ENCODE measurements at regions of chr6 and their contacts with region 1.

Region 1: DNA sequence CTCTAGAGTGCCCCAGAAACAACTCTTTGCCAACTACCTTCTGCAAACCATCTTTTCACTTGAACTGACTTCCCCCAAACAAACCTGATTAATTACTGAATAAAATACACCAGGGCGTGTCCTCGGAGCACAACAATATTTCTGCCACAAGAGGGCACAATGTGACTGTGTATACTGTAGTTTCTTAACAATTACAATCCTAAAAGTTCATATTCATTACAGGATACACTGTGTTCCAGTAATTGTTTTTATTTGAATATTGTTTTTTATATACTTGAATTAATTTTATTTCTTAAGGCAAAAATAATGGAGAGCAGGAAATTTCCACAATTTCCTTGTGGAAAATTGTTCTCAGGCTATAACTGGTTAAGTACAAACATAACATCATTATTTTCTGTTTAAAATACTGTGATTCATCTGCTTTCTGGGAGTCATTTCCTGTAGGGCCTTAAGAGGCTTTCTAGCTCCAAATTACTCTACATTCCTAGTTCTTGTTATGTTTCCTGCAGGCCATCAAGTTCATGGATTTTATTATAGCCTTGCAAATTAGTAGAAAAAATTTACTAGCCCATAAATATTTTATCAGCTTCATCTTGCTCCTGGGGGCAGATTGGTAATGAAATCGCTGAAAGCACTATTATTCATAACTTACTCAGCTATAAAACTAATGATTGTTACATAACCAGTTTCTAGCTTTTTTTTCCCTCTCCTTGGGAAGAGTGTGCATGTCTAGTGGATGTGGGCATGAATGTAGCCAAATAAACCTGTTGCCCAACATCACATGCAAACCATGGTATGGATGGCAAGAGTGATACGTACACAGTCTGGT is 51.9 kb upstream of the SLC22A16 start:
- DNase-seq: peak; percentile 62
- ATAC-seq: peak; percentile 55
- H3K4me3 ChIP-seq: no peak overlapping the region
- H3K27ac ChIP-seq: no peak overlapping the region
- H3K4me1 ChIP-seq: peaks cover 61% of the 10 kb centered on the region
- H3K27me3 ChIP-seq: no peaks in the 10 kb centered on the region
- CTCF ChIP-seq: peak; percentile 82
- EP300 ChIP-seq: peak in 1 of 2 experiments; percentile 18; a peak in 1 of 4 replicates
- POLR2A ChIP-seq: no peak
- RAD21 ChIP-seq: peak; percentile 71

Region 2: DNA sequence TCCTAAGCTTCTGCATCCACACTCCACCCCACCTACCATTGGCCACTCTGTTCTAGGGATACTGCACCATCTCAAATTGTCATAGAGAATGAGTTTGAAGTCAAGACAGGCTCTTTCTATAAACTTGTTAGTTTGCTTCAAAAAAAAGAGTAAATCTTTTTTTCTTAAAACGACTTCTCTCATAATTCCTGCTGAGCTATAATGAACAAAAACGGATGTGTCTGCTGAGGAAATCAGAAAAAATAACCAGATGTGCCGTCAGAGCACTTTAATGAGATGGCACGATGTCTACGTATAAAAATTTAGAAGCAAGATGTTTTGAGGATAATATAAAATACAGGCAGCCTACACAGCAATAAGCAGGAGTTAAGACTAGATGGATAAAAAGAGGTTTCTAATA is 89.0 kb before region 1 on chr6:
- CTCF ChIA-PET with region 1: no interaction called
- POLR2A ChIA-PET with region 1: no interaction called
- in situ Hi-C with region 1: no loop called
- intact Hi-C with region 1: no loop called
- DNase-seq: no peak
- ATAC-seq: no peak
- H3K4me3 ChIP-seq: no peak overlapping the region
- H3K27ac ChIP-seq: no peak overlapping the region
- H3K4me1 ChIP-seq: no peaks in the 10 kb centered on the region
- H3K27me3 ChIP-seq: peaks cover 0 to 10% of the 10 kb centered on the region in 2 experiments; a peak in 1 of 5 replicates
- CTCF ChIP-seq: no peak
- EP300 ChIP-seq: no peak
- POLR2A ChIP-seq: no peak
- RAD21 ChIP-seq: no peak

Region 3: DNA sequence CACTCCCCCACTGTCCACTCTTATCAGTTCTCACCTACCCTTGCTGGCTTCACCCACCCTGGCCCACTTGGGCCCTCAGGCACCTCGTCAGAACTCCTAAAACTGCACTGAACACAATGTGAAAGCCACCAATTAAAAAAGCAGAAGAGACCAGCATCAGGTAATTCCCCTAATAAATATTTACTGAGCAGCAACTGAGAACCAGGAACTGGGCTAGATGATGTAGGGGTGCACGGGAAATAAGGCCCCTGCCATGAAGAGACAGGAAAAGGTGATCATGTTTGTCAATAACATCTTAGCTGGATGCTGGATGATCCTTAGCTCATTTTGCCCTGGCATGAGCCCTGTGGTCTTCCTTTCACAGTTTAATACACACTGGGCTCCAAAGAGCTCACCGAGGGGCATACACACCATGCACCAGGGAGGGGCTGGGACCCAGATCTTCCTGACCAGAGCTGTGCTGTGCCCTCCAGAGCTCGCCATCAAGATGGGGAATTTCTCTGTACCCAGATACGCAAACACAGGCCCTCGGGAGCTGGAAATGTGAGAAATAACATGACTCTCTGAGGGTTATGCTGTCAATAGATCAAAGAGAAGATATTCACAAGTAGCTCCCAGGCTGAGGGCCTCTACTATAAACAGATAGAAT is 61.7 kb after region 1 on chr6:
- CTCF ChIA-PET with region 1: no interaction called
- POLR2A ChIA-PET with region 1: no interaction called
- in situ Hi-C with region 1: no loop called
- intact Hi-C with region 1: loop called (anchors 10 kb)
- DNase-seq: no peak
- ATAC-seq: no peak
- H3K4me3 ChIP-seq: no peak overlapping the region
- H3K27ac ChIP-seq: no peak overlapping the region
- H3K4me1 ChIP-seq: peaks cover 34% of the 10 kb centered on the region
- H3K27me3 ChIP-seq: no peaks in the 10 kb centered on the region
- CTCF ChIP-seq: no peak
- EP300 ChIP-seq: no peak
- POLR2A ChIP-seq: no peak
- RAD21 ChIP-seq: no peak

Region 4: DNA sequence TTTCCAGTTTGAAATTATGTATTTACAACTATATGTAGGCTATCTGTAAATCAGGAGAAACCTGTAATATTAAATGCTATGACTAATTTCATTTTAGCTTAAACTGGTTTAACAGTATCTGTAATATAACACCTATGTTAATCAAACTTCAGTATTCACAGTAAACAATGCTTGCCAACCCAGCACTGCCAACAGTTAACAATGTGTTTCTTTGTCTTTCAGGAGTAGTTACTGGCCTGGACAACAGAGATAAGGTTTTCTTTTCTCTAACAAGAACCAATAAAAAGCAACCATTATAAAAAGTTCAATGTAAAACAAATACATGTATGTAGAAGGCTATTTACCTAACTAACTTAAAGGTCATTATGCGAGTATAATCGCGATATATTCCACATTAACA is 128.2 kb after region 1 on chr6:
- CTCF ChIA-PET with region 1: no interaction called
- POLR2A ChIA-PET with region 1: no interaction called
- in situ Hi-C with region 1: no loop called
- intact Hi-C with region 1: loop called (anchors 10 kb)
- DNase-seq: peak; percentile 60
- ATAC-seq: peak; percentile 42; the same call in 2 of the 3 replicates
- H3K4me3 ChIP-seq: no peak overlapping the region
- H3K27ac ChIP-seq: peak overlapping the region; percentile 14
- H3K4me1 ChIP-seq: peaks cover 61% of the 10 kb centered on the region
- H3K27me3 ChIP-seq: no peaks in the 10 kb centered on the region
- CTCF ChIP-seq: no peak
- EP300 ChIP-seq: no peak
- POLR2A ChIP-seq: no peak
- RAD21 ChIP-seq: no peak

Region 5: GRCh38 chr6:110682460-110682853 is 154.1 kb after region 1 on chr6:
- CTCF ChIA-PET with region 1: no interaction called
- POLR2A ChIA-PET with region 1: no interaction called
- in situ Hi-C with region 1: no loop called
- intact Hi-C with region 1: loop called (anchors 1 kb)
- DNase-seq: peak; percentile 85
- ATAC-seq: peak; percentile 98
- H3K4me3 ChIP-seq: peak overlapping the region in 1 of 3 experiments; percentile 6; a peak in 1 of 6 replicates
- H3K27ac ChIP-seq: peak overlapping the region; percentile 49
- H3K4me1 ChIP-seq: peaks cover 31% of the 10 kb centered on the region
- H3K27me3 ChIP-seq: no peaks in the 10 kb centered on the region
- CTCF ChIP-seq: peak; percentile 87
- EP300 ChIP-seq: no peak
- POLR2A ChIP-seq: no peak
- RAD21 ChIP-seq: peak; percentile 63; the same call in 1 of the 2 replicates

Region 6: DNA sequence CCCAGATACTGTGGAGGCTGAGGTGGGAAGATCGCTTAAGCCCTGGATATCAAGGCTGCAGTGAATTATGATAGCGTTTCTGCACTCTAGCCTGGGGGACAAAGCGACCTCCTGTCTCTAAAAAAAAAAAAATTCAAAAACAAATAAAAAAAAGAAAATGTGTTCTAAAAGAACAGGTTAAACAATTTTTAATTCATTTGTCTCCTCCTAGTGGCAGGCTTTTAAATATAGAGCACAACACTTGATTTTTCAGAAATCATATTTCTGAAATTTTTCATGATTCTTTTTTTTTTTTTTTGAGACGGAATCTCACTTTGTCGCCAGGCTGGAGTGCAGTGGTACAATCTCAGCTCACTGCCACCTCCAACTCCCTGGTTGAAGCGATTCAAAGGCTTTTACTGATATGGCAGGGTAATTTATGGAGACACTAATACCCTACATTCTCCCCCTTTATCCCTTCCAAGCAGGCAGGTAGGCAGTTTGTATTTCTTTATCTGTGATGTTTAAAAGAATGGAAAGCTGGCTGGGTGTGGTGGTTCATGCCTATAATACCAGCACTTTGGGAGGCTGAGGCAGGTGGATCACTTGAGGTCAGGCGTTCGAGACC is 421.5 kb after region 1 on chr6:
- CTCF ChIA-PET with region 1: interaction called, 6 read pairs
- POLR2A ChIA-PET with region 1: no interaction called
- in situ Hi-C with region 1: no loop called
- intact Hi-C with region 1: loop called (anchors 1 kb)
- DNase-seq: no peak
- ATAC-seq: no peak
- H3K4me3 ChIP-seq: no peak overlapping the region
- H3K27ac ChIP-seq: no peak overlapping the region
- H3K4me1 ChIP-seq: peaks cover 45% of the 10 kb centered on the region
- H3K27me3 ChIP-seq: no peaks in the 10 kb centered on the region
- CTCF ChIP-seq: peak; percentile 23; the same call in 1 of the 2 replicates
- EP300 ChIP-seq: no peak
- POLR2A ChIP-seq: no peak
- RAD21 ChIP-seq: no peak

Region 7: DNA sequence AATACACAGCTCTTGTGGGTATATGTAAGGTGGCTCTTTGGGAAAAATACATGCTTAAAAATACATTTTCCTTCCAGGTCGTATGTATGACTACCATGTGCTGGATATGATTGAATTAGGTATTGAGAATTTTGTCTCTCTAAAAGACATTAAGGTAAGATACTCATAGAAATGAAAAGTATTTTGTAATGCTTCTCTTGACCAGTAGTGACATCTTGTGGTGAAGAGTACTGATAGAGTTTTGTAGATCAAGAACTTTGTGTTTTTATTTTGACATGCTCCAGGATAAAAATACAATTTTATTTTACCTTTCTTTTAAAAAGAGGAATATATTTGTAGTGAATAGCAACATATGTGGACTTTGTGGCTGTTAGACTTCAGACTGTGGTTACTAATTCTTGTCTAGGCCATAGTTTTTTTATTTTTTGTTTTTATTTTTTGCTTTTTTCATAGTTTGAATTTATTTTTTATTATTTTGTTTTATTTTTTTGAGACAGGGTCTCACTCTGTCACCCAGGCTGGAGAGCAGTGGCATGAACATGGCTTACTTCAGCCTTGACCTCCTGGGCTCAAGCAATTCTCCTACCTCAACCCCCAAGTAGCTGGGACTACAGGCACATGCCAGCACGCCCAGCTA is 471.4 kb after region 1 on chr6:
- CTCF ChIA-PET with region 1: interaction called, 12 read pairs
- POLR2A ChIA-PET with region 1: no interaction called
- in situ Hi-C with region 1: loop called (anchors 10 kb)
- intact Hi-C with region 1: loop called (anchors 2 kb)
- DNase-seq: peak; percentile 22
- ATAC-seq: no peak
- H3K4me3 ChIP-seq: no peak overlapping the region
- H3K27ac ChIP-seq: no peak overlapping the region
- H3K4me1 ChIP-seq: peaks cover 3% of the 10 kb centered on the region
- H3K27me3 ChIP-seq: no peaks in the 10 kb centered on the region
- CTCF ChIP-seq: peak; percentile 45
- EP300 ChIP-seq: no peak
- POLR2A ChIP-seq: no peak
- RAD21 ChIP-seq: 0 out of 2 replicates have a peak, but pooled peaks have one; percentile 36